ENCODE measurements at regions of chr19 and their contacts with region 1.

Region 1: GRCh38 chr19:51986309-51987291 is at the start of gene ZNF350:
- DNase-seq: peak; percentile 95
- H3K4me3 ChIP-seq: peak within 1 kb of the TSS; percentile 58 to 80 (median 61)
- H3K27ac ChIP-seq: peak within 1 kb of the TSS; percentile 48
- H3K4me1 ChIP-seq: peaks cover 2% of the 10 kb centered on the region
- H3K27me3 ChIP-seq: no peaks in the 10 kb centered on the region
- CTCF ChIP-seq: no peak
- POLR2A ChIP-seq: no peak
- total RNA-seq, gene ZNF350: 8.4 and 9.8 TPM in 2 replicates

Region 2: GRCh38 chr19:52007806-52008557 is 21.4 kb after region 1 on chr19 and contains the start of gene ZNF615:
- CTCF ChIA-PET with region 1: no interaction called
- POLR2A ChIA-PET with region 1: no interaction called
- dilution Hi-C with region 1: no loop called
- intact Hi-C with region 1: loop called (anchors 1 kb)
- DNase-seq: peak; percentile 91
- H3K4me3 ChIP-seq: peak within 1 kb of the TSS; percentile 57 to 76 (median 69)
- H3K27ac ChIP-seq: peak within 1 kb of the TSS; percentile 83
- H3K4me1 ChIP-seq: peaks cover 7% of the 10 kb centered on the region
- H3K27me3 ChIP-seq: no peaks in the 10 kb centered on the region
- CTCF ChIP-seq: no peak
- POLR2A ChIP-seq: no peak
- total RNA-seq, gene ZNF615: 4.5 and 5.1 TPM in 2 replicates

Region 3: GRCh38 chr19:52065399-52065798 is 78.8 kb after region 1 on chr19:
- CTCF ChIA-PET with region 1: no interaction called
- POLR2A ChIA-PET with region 1: no interaction called
- dilution Hi-C with region 1: no loop called
- intact Hi-C with region 1: no loop called
- DNase-seq: no peak
- H3K4me3 ChIP-seq: no peak overlapping the region
- H3K27ac ChIP-seq: no peak overlapping the region
- H3K4me1 ChIP-seq: no peaks in the 10 kb centered on the region
- H3K27me3 ChIP-seq: no peaks in the 10 kb centered on the region
- CTCF ChIP-seq: no peak
- POLR2A ChIP-seq: no peak

Region 4: GRCh38 chr19:52211926-52212571 is 225.4 kb after region 1 on chr19:
- CTCF ChIA-PET with region 1: no interaction called
- POLR2A ChIA-PET with region 1: no interaction called
- dilution Hi-C with region 1: no loop called
- intact Hi-C with region 1: no loop called
- DNase-seq: no peak
- H3K4me3 ChIP-seq: no peak overlapping the region
- H3K27ac ChIP-seq: no peak overlapping the region
- H3K4me1 ChIP-seq: no peaks in the 10 kb centered on the region
- H3K27me3 ChIP-seq: no peaks in the 10 kb centered on the region
- CTCF ChIP-seq: no peak
- POLR2A ChIP-seq: no peak

Measured in endothelial cell of umbilical vein (primary cell).